ENCODE measurements at regions of chr22 and their contacts with region 1.

Region 1: DNA sequence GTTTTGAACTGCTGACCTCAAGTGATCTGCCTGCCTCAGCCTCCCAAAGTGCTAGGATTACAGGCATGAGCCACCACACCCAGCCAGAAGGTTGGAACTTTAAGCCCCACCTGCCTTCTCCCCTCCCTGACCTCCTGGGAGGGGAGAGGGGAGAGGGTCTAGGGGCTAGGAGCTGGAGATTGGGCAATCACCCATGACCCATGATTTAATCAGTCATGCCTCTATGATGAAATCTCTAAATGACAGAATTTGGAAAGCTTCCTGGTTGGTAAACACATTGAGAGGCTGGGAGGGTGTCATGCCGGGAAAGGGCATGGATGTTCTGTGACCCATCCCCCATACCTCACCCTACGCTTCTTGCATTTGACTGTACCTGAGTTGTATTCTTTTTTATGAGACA is 17.1 kb upstream of the TFIP11 start:
- DNase-seq: no peak
- ATAC-seq: peak in 2 of 8 donors; percentile 10 to 23
- H3K4me3 ChIP-seq: no peak overlapping the region
- H3K27ac ChIP-seq: peak overlapping the region in 5 of 10 donors; percentile 5 to 81 (median 41)
- H3K4me1 ChIP-seq: peaks cover 0 to 51% (median 20%) of the 10 kb centered on the region in 9 donors
- H3K27me3 ChIP-seq: no peaks in the 10 kb centered on the region
- CTCF ChIP-seq: no peak

Region 2: DNA sequence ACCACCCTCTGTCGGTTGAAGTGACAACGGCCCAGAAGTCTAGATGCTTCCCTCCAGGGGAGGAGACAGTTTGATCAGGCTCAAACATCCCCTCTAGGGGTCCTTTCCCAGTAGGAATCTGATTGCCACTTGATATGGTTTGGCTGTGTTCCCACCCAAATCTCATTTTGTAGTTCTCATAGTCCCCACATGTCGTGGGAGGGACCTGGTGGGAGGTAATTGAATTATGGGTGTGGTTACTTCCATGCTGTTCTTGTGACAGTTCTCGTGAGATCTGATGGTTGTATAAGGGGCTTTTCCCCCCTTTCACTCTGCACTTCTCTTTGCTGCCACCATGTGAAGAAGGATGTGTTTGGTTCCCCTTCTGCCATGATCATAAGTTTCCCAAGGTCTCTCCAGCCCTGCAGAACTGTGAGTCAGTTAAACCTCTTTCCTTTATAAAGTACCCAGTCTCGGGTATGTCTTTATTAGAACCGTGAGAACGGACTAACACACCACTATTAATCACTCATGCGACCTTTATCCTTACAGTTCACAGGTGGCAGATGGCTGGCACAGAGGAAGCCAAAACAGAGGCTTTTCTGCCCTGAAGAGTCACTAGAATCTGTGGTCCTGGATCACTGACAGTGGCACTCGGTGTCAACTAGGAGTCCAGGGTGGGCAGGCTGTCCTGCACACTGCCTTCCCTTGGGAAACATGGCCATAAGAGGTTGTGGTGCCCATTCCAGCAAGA is 78.7 kb before region 1 on chr22:
- intact Hi-C with region 1: no loop called
- DNase-seq: no peak
- ATAC-seq: no peak
- H3K4me3 ChIP-seq: no peak overlapping the region
- H3K27ac ChIP-seq: no peak overlapping the region
- H3K4me1 ChIP-seq: peaks cover 0 to 9% (median 0%) of the 10 kb centered on the region in 9 donors
- H3K27me3 ChIP-seq: no peaks in the 10 kb centered on the region
- CTCF ChIP-seq: no peak

Region 3: DNA sequence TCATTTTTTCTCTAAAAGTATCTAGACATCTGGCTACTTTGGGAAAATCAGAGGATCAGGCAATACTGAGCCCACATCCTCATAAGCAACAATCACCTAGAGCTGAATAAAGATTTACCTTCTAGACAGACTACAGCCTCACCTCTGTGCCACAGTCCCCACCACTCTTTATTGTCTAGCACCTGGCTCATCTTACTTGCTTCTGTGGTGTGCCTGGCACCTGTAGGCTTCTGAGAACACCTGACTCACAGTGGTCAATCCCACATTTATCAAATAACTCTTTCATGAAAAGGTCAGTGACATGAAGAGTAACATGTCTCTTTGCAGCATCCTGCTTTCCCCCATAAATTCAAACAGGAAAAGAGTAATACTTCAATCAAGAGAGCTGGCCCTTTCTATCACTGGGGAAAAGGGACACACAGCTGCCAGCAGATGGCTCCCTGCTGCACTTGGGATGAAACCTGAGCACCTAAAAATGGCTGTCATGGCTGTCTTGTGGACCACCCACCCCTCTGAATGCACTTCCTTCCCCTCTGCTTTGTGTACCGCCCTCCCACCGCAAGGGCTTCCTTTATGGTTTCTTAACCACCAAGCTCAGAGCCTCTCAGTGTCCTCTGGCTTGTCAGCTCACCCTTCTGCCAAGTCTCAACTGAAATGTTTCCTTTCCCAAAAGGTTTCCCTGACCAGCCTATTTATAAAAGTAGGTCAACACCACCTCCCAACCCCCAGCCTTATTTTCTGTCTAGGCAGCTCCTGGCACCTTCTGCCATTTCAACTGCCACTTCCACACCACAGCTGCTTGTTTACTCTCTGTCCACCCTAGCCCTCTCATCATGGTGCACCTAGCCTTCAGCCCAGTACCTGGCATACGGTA is 26.4 kb before region 1 on chr22:
- intact Hi-C with region 1: loop called in 1 of 10 experiments (anchors 1 kb)
- DNase-seq: peak; percentile 25 to 41
- ATAC-seq: peak; percentile 78 to 93 (median 85)
- H3K4me3 ChIP-seq: peak overlapping the region in 2 of 10 donors; percentile 5 to 16
- H3K27ac ChIP-seq: peak overlapping the region; percentile 29 to 80 (median 69)
- H3K4me1 ChIP-seq: peaks cover 4 to 27% (median 22%) of the 10 kb centered on the region in 9 donors
- H3K27me3 ChIP-seq: no peaks in the 10 kb centered on the region
- CTCF ChIP-seq: peak; percentile 7 to 69 (median 58)

Region 4: GRCh38 chr22:26550498-26551033 is 21.2 kb after region 1 on chr22:
- intact Hi-C with region 1: loop called in 1 of 10 experiments (anchors 1 kb)
- DNase-seq: peak; percentile 67
- ATAC-seq: peak; percentile 79 to 92 (median 90)
- H3K4me3 ChIP-seq: peak overlapping the region in 1 of 10 donors; percentile 14
- H3K27ac ChIP-seq: peak overlapping the region; percentile 42 to 88 (median 80)
- H3K4me1 ChIP-seq: peaks cover 10 to 78% (median 67%) of the 10 kb centered on the region in 9 donors
- H3K27me3 ChIP-seq: no peaks in the 10 kb centered on the region
- CTCF ChIP-seq: no peak

Measured in heart right ventricle (tissue), 16 donors.